Mammary epithelial cell (primary cell): ENCODE measurements at regions of chr1 and their contacts with region 1.

Region 1: GRCh38 chr1:147142886-147143285 is 29.4 kb downstream of the PRKAB2 start:
- DNase-seq: no peak
- H3K4me3 ChIP-seq: no peak overlapping the region
- H3K27ac ChIP-seq: no peak overlapping the region
- H3K4me1 ChIP-seq: no peaks in the 10 kb centered on the region
- H3K27me3 ChIP-seq: no peaks in the 10 kb centered on the region
- CTCF ChIP-seq: no peak

Region 2: GRCh38 chr1:147084273-147085096 is 58.4 kb before region 1 on chr1:
- CTCF ChIA-PET with region 1: no interaction called
- dilution Hi-C with region 1: no loop called
- in situ Hi-C with region 1: no loop called
- intact Hi-C with region 1: no loop called
- DNase-seq: peak; percentile 98
- H3K4me3 ChIP-seq: peak overlapping the region; percentile 54 to 67 (median 57)
- H3K27ac ChIP-seq: peak overlapping the region; percentile 97
- H3K4me1 ChIP-seq: peaks cover 13% of the 10 kb centered on the region
- H3K27me3 ChIP-seq: peaks cover 14% of the 10 kb centered on the region
- CTCF ChIP-seq: no peak

Region 3: DNA sequence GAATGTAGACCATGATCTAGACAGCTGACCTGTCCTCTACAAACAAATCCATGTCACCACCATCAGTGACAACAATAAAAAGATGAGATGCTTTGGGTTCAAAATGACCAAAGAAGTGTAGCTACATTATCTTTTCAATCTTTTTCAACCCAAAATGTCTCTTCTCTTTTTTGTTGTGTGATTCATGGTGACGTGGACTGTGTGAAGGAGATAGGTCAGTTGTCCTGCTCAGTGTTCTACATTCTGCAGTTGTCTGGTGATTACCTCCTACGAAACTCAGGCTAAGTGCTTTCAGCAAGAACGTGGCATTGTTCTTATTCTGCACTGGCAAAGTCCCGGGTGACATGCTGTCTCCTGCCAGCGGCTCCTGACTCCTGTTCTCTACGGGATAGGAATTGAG is 43.7 kb before region 1 on chr1:
- CTCF ChIA-PET with region 1: no interaction called
- dilution Hi-C with region 1: no loop called
- in situ Hi-C with region 1: no loop called
- intact Hi-C with region 1: no loop called
- DNase-seq: no peak
- H3K4me3 ChIP-seq: no peak overlapping the region
- H3K27ac ChIP-seq: no peak overlapping the region
- H3K4me1 ChIP-seq: no peaks in the 10 kb centered on the region
- H3K27me3 ChIP-seq: no peaks in the 10 kb centered on the region
- CTCF ChIP-seq: no peak

Region 4: DNA sequence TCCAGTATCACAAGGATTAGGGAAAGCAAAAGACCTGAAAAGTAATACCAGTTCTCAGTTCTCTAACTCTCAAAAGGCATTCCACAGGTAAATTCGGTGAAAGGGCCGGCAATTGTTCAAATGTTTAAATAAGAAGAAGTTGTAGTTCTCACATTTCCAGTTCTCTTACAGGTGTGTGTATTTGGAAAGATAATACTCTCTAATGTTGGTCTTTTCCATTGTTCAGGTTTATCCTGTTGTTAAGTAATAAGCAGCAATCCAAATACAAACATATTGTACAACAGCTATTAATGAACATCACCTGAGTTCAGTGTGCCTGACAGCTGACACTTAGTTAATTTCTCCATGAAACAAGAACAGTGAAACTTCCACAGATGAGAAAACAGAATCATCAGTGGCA is 42.6 kb after region 1 on chr1:
- CTCF ChIA-PET with region 1: no interaction called
- dilution Hi-C with region 1: no loop called
- in situ Hi-C with region 1: no loop called
- intact Hi-C with region 1: loop called (anchors 5 kb)
- DNase-seq: no peak
- H3K4me3 ChIP-seq: no peak overlapping the region
- H3K27ac ChIP-seq: no peak overlapping the region
- H3K4me1 ChIP-seq: no peaks in the 10 kb centered on the region
- H3K27me3 ChIP-seq: no peaks in the 10 kb centered on the region
- CTCF ChIP-seq: no peak

Region 5: GRCh38 chr1:147214842-147215539 is 72.1 kb after region 1 on chr1:
- CTCF ChIA-PET with region 1: no interaction called
- dilution Hi-C with region 1: loop called (anchors 5 kb)
- in situ Hi-C with region 1: no loop called
- intact Hi-C with region 1: no loop called
- DNase-seq: no peak
- H3K4me3 ChIP-seq: no peak overlapping the region
- H3K27ac ChIP-seq: no peak overlapping the region
- H3K4me1 ChIP-seq: no peaks in the 10 kb centered on the region
- H3K27me3 ChIP-seq: no peaks in the 10 kb centered on the region
- CTCF ChIP-seq: no peak